Heart right ventricle (tissue), 16 donors: ENCODE measurements at regions of chr15 and their contacts with region 1.

Region 1: GRCh38 chr15:50876989-50877360 is 31.5 kb upstream of the AP4E1 start:
- DNase-seq: peak in 1 of 2 donors; percentile 84
- ATAC-seq: peak; percentile 44 to 84 (median 77)
- H3K4me3 ChIP-seq: peak overlapping the region in 9 of 10 donors; percentile 14 to 57 (median 45)
- H3K27ac ChIP-seq: peak overlapping the region in 3 of 10 donors; percentile 34 to 70 (median 35)
- H3K4me1 ChIP-seq: peaks cover 0 to 57% (median 0%) of the 10 kb centered on the region in 9 donors
- H3K27me3 ChIP-seq: no peaks in the 10 kb centered on the region
- CTCF ChIP-seq: peak; percentile 92 to 98 (median 95)

Region 2: GRCh38 chr15:50774450-50774849 is 102.5 kb before region 1 on chr15:
- intact Hi-C with region 1: loop called in 7 of 10 experiments (anchors 5 to 10 kb)
- DNase-seq: no peak
- ATAC-seq: peak in 1 of 8 donors; percentile 59
- H3K4me3 ChIP-seq: no peak overlapping the region
- H3K27ac ChIP-seq: no peak overlapping the region
- H3K4me1 ChIP-seq: no peaks in the 10 kb centered on the region
- H3K27me3 ChIP-seq: no peaks in the 10 kb centered on the region
- CTCF ChIP-seq: no peak